B cell (primary cell): ENCODE measurements at regions of chr12 and their contacts with region 1.

Region 1: DNA sequence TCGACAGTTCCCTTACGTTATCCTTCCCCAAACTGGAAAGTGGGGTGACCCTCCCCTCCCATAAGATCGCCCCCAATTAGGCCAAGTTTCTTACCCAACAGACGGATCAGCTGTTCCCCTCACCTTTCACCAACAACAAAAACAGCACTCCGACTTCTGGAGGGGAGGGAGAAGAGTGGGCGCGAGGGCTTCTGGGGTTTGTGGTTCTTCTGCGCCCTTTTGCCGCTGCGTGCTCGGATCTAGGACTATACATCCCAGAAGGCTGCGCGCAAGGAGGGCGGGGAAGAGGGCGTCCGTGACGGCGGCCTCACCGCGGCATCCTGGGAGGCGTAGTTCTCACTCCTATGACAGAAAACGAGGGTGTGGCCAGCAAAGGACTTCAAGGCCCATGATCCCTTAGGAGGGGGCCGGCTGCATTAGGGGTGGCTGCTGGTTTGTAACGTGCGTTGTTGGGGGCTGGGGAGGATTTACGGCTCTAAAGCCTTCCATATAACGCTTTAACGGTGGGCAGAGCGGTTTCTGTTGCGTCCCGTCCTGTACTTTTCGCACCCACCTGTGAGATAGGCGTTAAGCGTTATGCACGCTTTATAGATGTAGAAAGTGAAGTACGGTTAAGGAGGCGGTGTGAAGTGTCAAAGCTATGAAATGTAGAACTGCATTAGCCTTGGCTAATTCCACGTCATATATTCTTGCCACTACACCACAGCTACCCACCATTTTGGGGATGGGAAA is at the start of gene CALCOCO1:
- DNase-seq: peak; percentile 98
- ATAC-seq: peak; percentile 97
- H3K4me3 ChIP-seq: peak within 1 kb of the TSS; percentile 51 to 96 (median 85)
- H3K4me3 Mint-ChIP-seq: peak within 1 kb of the TSS; percentile 91
- H3K27ac ChIP-seq: peak within 1 kb of the TSS; percentile 60 to 61
- H3K27ac Mint-ChIP-seq: peak within 1 kb of the TSS; percentile 82
- H3K4me1 ChIP-seq: peaks cover 13 to 21% of the 10 kb centered on the region in 2 donors
- H3K4me1 Mint-ChIP-seq: peaks cover 22% of the 10 kb centered on the region
- H3K27me3 ChIP-seq: no peaks in the 10 kb centered on the region
- H3K27me3 Mint-ChIP-seq: peaks cover 11% of the 10 kb centered on the region
- CTCF ChIP-seq: no peak
- total RNA-seq, gene CALCOCO1: 171 and 179 TPM in 2 replicates

Region 2: DNA sequence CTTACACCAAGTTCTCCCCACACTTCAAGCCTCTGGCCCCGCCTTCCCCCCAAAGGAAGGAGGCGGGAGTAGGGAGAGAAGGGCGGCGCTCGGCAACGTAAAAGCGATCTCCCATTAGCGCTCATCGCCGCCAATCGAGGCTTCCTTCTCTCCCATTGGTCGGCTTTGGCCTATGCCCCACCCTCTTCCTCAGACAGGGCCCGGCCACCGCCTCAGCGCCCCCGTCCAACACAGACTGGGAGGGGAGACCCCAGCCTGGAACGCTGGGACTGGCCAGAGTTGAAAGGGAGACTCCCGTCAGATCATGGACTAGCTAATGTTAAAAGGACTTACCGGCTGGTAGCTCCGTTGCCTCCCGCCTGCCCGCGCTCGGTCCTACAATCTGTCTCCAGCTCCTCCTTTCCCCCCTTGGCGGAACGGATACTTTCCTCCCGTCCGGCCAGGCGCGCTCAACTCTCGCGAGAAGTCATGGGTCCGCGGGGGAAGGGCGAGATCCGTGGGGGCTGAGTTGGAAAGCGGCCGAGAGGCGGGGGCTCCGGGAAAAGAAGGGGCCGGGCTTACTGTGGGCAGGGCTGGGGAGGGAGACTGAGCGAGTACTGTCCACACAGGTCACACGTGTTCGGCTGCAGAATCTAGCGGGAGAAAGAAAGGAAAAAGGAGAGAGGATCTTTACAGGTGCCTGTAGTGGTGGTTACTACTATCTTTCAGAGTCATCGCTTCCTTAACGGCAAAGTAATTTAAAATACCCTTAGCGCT is 101.4 kb before region 1 on chr12 and contains the start of gene ATF7:
- CTCF ChIA-PET with region 1: no interaction called
- POLR2A ChIA-PET with region 1: no interaction called
- intact Hi-C with region 1: loop called (anchors 1 kb)
- DNase-seq: peak; percentile 99
- ATAC-seq: peak; percentile 93
- H3K4me3 ChIP-seq: peak within 1 kb of the TSS; percentile 60 to 91 (median 74)
- H3K4me3 Mint-ChIP-seq: peak within 1 kb of the TSS; percentile 91
- H3K27ac ChIP-seq: peak within 1 kb of the TSS; percentile 77 to 88
- H3K27ac Mint-ChIP-seq: peak within 1 kb of the TSS; percentile 98
- H3K4me1 ChIP-seq: peaks cover 24 to 29% of the 10 kb centered on the region in 2 donors
- H3K4me1 Mint-ChIP-seq: peaks cover 46% of the 10 kb centered on the region
- H3K27me3 ChIP-seq: no peaks in the 10 kb centered on the region
- H3K27me3 Mint-ChIP-seq: no peaks in the 10 kb centered on the region
- CTCF ChIP-seq: no peak
- total RNA-seq, gene ATF7: 42.2 and 42.9 TPM in 2 replicates

Region 3: GRCh38 chr12:53696285-53696654 is 31.2 kb before region 1 on chr12:
- CTCF ChIA-PET with region 1: interaction called, 3 read pairs
- POLR2A ChIA-PET with region 1: interaction called, 3 read pairs
- intact Hi-C with region 1: loop called (anchors 2 kb)
- DNase-seq: peak; percentile 48
- ATAC-seq: peak; percentile 46
- H3K4me3 ChIP-seq: peak overlapping the region in 1 of 5 experiments; percentile 32
- H3K4me3 Mint-ChIP-seq: peak overlapping the region; percentile 77
- H3K27ac ChIP-seq: no peak overlapping the region
- H3K27ac Mint-ChIP-seq: no peak overlapping the region
- H3K4me1 ChIP-seq: peaks cover 29 to 38% of the 10 kb centered on the region in 2 donors
- H3K4me1 Mint-ChIP-seq: peaks cover 30% of the 10 kb centered on the region
- H3K27me3 ChIP-seq: peaks cover 3 to 81% (median 69%) of the 10 kb centered on the region in 4 experiments
- H3K27me3 Mint-ChIP-seq: peaks cover 78% of the 10 kb centered on the region
- CTCF ChIP-seq: no peak

Region 4: DNA sequence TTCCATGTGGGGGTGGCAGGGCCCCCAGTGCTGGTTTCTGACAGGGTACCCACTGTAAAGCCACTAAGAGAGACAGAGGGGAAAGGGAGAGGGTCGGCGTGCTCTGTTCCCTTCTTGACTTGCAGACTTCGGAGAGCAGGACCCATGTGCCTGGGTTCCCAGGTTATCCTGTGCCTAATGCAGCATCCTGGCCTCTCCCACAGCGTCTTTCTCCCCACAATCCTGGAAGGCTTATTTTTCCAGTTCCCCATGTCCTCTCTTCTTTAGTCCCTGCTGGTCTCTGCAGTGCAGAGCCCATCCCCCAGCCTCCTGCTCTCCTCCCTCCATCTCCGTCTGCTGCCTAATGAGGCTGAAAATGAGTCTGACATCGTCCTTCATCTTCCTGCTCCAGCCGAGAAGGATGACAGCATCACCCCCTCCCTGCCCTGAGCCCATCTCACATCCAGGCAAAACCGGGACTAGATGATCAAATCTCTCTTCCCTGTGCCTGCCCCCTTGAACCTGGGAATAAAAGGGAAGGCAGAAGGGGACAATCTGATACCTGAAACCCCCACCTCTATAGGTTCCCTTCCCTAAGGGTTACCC is 15.3 kb before region 1 on chr12:
- CTCF ChIA-PET with region 1: no interaction called
- POLR2A ChIA-PET with region 1: no interaction called
- intact Hi-C with region 1: no loop called
- DNase-seq: no peak
- ATAC-seq: no peak
- H3K4me3 ChIP-seq: no peak overlapping the region
- H3K4me3 Mint-ChIP-seq: no peak overlapping the region
- H3K27ac ChIP-seq: no peak overlapping the region
- H3K27ac Mint-ChIP-seq: no peak overlapping the region
- H3K4me1 ChIP-seq: peaks cover 0 to 5% of the 10 kb centered on the region in 2 donors
- H3K4me1 Mint-ChIP-seq: peaks cover 3% of the 10 kb centered on the region
- H3K27me3 ChIP-seq: peaks cover 0 to 7% (median 0%) of the 10 kb centered on the region in 4 experiments
- H3K27me3 Mint-ChIP-seq: peaks cover 5% of the 10 kb centered on the region
- CTCF ChIP-seq: no peak

Region 5: DNA sequence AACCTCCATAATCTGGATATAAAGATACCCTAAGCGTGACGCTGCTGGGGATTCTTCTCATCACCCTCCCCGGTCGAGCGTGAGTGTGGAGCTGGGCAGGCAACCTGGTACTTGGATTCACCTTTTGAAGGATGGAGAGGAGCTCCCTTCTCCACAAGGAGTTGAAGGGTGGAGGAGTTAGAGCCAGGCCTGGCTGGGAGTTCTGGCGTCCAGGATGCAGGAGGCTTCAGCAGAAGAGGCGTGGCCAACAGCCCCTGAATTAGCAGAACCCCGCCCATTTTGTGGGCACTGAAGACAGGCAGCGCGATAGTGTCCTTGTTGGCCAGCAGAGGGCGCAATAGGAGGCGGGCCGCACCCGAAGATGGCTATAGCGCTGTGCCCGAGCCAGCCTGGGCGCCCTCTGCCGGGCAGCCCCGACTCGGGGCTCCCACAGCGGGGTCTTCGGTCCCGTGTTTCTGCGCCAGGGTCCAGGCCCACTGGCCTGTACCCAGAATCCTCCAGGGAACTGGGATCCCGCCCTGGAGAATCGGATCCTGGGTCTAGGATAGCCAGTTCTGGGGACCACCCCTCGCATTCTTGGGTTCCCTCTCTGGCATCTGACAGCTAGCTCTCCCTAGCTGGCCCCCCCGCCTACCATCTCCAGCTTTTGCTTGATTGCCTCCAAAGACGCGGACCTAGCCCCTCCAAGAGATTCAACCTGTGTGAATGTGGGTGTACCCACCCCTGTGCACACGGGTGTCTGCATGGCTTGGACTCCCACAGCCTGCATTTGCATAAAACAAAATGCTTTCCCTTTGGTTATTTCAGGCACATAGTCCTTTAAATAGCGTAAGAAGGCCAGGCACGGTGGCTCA is 487.3 kb after region 1 on chr12:
- CTCF ChIA-PET with region 1: no interaction called
- POLR2A ChIA-PET with region 1: no interaction called
- intact Hi-C with region 1: loop called (anchors 10 kb)
- DNase-seq: peak; percentile 95
- ATAC-seq: peak; percentile 83
- H3K4me3 ChIP-seq: peak overlapping the region; percentile 3 to 58 (median 46)
- H3K4me3 Mint-ChIP-seq: peak overlapping the region; percentile 90
- H3K27ac ChIP-seq: no peak overlapping the region
- H3K27ac Mint-ChIP-seq: peak overlapping the region; percentile 33
- H3K4me1 ChIP-seq: peaks cover 36 to 46% of the 10 kb centered on the region in 2 donors
- H3K4me1 Mint-ChIP-seq: peaks cover 44% of the 10 kb centered on the region
- H3K27me3 ChIP-seq: peaks cover 0 to 30% (median 6%) of the 10 kb centered on the region in 4 experiments
- H3K27me3 Mint-ChIP-seq: peaks cover 6% of the 10 kb centered on the region
- CTCF ChIP-seq: peak; percentile 100